Transverse colon (tissue), 4 donors: ENCODE measurements at regions of chr5 and their contacts with region 1.

Region 1: GRCh38 chr5:139215107-139215975 is 17.2 kb upstream of the SIL1 start:
- DNase-seq: no peak
- H3K4me3 ChIP-seq: no peak overlapping the region
- H3K27ac ChIP-seq: no peak overlapping the region
- H3K4me1 ChIP-seq: no peaks in the 10 kb centered on the region
- H3K27me3 ChIP-seq: no peaks in the 10 kb centered on the region
- CTCF ChIP-seq: no peak
- EP300 ChIP-seq: no peak
- POLR2A ChIP-seq: no peak

Region 2: DNA sequence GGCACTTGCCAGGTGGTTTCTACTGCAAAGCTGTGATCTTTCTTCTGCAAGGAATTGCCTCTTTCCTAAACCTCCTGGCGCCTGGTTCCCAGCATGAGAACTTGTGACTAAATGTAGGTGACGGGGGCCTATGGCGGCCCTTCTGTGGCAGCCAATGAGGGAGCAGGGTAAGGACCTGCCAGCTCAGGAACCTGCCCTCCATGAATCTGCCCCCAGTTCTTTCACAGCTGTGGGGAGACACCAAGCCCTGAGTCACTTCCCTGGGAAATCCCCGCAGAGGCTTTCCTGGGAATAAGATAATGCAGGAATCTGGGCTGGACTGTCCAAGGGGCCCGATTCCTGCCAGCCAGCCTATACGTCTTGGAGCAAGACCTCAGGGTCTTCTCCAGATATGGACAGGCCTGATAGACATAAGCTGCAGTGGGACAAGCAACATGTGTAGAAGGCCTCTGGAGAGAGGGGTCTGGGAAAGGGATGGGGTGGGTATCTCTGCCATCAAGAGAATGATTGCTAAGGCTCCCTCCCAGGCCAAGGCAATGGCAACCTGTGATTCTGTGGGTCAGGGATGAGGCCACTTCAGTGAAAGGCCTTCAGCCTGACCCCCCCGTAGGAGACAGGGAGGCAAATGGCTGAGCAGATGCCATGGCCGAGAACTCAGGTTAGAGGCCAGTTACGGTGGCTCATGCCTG is 518.7 kb before region 1 on chr5:
- in situ Hi-C with region 1: no loop called
- intact Hi-C with region 1: no loop called
- DNase-seq: no peak
- H3K4me3 ChIP-seq: no peak overlapping the region
- H3K27ac ChIP-seq: no peak overlapping the region
- H3K4me1 ChIP-seq: no peaks in the 10 kb centered on the region
- H3K27me3 ChIP-seq: no peaks in the 10 kb centered on the region
- CTCF ChIP-seq: no peak
- EP300 ChIP-seq: no peak
- POLR2A ChIP-seq: no peak

Region 3: GRCh38 chr5:139197710-139198669 is 17.4 kb before region 1 on chr5 and contains the start of gene SIL1:
- in situ Hi-C with region 1: no loop called
- intact Hi-C with region 1: loop called (anchors 1 kb)
- DNase-seq: peak; percentile 98
- H3K4me3 ChIP-seq: peak within 1 kb of the TSS; percentile 53 to 83 (median 66)
- H3K27ac ChIP-seq: peak within 1 kb of the TSS; percentile 87 to 96 (median 92)
- H3K4me1 ChIP-seq: peaks cover 0 to 24% (median 2%) of the 10 kb centered on the region in 4 donors
- H3K27me3 ChIP-seq: no peaks in the 10 kb centered on the region
- CTCF ChIP-seq: no peak
- EP300 ChIP-seq: no peak
- POLR2A ChIP-seq: peak; percentile 87
- total RNA-seq, gene SIL1: 11.1 to 38.1 (median 29.0) TPM